Left ventricle myocardium superior (tissue), 1 donor: ENCODE measurements at regions of chr3 and their contacts with region 1.

Region 1: DNA sequence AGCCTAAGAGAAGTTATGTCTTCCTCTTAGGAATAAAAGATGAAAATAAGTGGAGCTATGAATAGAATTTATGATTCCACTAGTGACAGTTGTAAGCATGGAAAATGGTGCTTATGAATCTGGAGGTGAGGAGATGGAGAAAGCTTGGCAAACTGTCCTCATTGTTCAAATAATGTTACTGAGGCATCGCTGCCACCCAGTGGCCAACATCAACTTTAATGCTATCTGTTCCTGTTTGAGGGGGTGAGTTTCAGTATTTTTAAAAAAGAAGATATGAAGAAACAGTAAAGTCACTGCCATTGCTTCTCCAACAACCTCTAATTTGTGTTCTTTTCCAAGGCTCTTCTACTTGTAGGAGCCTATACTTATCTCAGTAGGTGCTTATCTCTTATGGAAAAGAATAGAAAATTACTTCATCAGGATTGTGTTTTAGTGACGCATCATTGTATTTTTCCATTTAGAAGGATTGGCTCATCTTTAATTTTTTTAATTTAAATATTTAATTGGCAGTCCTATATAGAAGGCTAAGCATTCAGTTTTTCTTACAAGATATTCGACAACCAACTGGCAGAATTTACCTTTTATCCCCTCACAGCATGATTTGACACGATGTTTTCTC is 260.4 kb upstream of the P2RY1 start:
- DNase-seq: peak; percentile 69
- ATAC-seq: peak; percentile 92

Region 2: GRCh38 chr3:152471814-152472671 is 102.5 kb before region 1 on chr3:
- intact Hi-C with region 1: loop called (anchors 10 kb)
- DNase-seq: peak; percentile 32
- ATAC-seq: peak; percentile 80

Region 3: DNA sequence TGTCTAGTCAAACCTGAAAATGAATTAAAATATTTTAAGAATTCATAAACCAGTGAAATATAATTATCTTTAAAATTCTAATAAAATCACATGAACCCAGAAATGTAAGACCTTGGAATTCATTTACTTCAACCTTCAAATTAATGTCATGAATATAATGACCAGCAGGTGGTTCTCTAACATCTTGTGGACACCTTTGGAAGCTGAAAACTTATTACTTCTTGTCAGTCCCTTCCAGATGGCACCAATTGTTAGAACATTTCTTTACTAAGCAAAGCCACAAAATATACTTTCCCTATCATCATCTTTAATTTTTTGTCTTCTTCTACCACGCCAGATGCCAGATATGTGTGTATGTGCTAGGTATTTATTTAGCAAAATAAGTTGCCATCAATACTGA is 65.9 kb before region 1 on chr3:
- intact Hi-C with region 1: loop called (anchors 5 kb)
- DNase-seq: no peak
- ATAC-seq: peak; percentile 39